CD14-positive monocyte (primary cell): ENCODE measurements at regions of chr19 and their contacts with region 1.

Region 1: DNA sequence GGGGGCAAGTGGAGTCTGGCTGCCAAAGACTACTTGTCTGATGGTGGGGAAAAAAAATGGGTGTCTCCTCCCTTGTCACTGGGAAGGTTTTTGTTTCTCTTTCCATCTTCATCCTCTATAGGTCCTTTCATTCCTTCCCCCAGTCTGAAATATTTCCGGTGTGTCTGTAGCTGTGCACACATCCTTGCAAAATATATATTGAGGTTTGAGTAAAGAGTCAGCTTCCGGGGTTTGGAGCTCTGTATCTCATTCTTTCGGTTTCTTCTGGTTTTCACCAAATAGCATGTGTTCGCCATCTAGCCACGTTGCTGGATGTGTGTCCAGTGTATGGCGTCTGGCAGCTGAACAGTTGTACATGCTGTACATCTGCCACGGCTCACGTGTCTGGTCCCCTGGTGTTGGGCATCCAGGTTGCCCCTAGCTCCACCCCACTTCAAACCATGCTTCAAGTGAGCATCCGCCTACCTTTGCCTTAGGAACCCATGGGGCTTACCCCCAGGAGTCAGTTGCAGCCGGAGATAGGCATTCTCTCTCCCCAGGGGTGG is 142.2 kb downstream of the SIPA1L3 start:
- DNase-seq: peak; percentile 79 to 89 (median 80)
- H3K4me3 ChIP-seq: peak overlapping the region; percentile 31 to 64 (median 33)
- H3K4me3 Mint-ChIP-seq: peak overlapping the region; percentile 78 to 87
- H3K27ac ChIP-seq: peak overlapping the region; percentile 87 to 92
- H3K27ac Mint-ChIP-seq: peak overlapping the region; percentile 99 to 100 (median 99)
- H3K4me1 ChIP-seq: peaks cover 32 to 35% of the 10 kb centered on the region in 2 donors
- H3K4me1 Mint-ChIP-seq: peaks cover 43% of the 10 kb centered on the region
- H3K27me3 ChIP-seq: no peaks in the 10 kb centered on the region
- H3K27me3 Mint-ChIP-seq: peaks cover 0 to 5% (median 0%) of the 10 kb centered on the region in 3 donors
- CTCF ChIP-seq: no peak

Region 2: GRCh38 chr19:38004521-38005223 is 44.5 kb before region 1 on chr19:
- intact Hi-C with region 1: loop called in 1 of 2 experiments (anchors 5 kb)
- DNase-seq: peak; percentile 73 to 89 (median 88)
- H3K4me3 ChIP-seq: peak overlapping the region; percentile 34 to 77 (median 65)
- H3K4me3 Mint-ChIP-seq: no peak overlapping the region
- H3K27ac ChIP-seq: peak overlapping the region; percentile 0 to 70
- H3K27ac Mint-ChIP-seq: no peak overlapping the region
- H3K4me1 ChIP-seq: peaks cover 22 to 33% of the 10 kb centered on the region in 2 donors
- H3K4me1 Mint-ChIP-seq: peaks cover 14% of the 10 kb centered on the region
- H3K27me3 ChIP-seq: no peaks in the 10 kb centered on the region
- H3K27me3 Mint-ChIP-seq: peaks cover 0 to 6% (median 3%) of the 10 kb centered on the region in 3 donors
- CTCF ChIP-seq: no peak

Region 3: GRCh38 chr19:38183251-38183897 is 134.2 kb after region 1 on chr19:
- intact Hi-C with region 1: no loop called
- DNase-seq: no peak
- H3K4me3 ChIP-seq: no peak overlapping the region
- H3K4me3 Mint-ChIP-seq: no peak overlapping the region
- H3K27ac ChIP-seq: no peak overlapping the region
- H3K27ac Mint-ChIP-seq: peak overlapping the region in 1 of 7 donors; percentile 10
- H3K4me1 ChIP-seq: no peaks in the 10 kb centered on the region
- H3K4me1 Mint-ChIP-seq: no peaks in the 10 kb centered on the region
- H3K27me3 ChIP-seq: no peaks in the 10 kb centered on the region
- H3K27me3 Mint-ChIP-seq: peaks cover 0 to 3% (median 0%) of the 10 kb centered on the region in 3 donors
- CTCF ChIP-seq: no peak